ENCODE measurements at regions of chr6 and their contacts with region 1.

Region 1: GRCh38 chr6:117906853-117907599 is at the start of gene SLC35F1:
- DNase-seq: peak; percentile 5
- ATAC-seq: peak; percentile 88
- H3K4me3 ChIP-seq: peak within 1 kb of the TSS; percentile 59 to 78 (median 68)
- H3K27ac ChIP-seq: no peak within 1 kb of the TSS
- H3K4me1 ChIP-seq: peaks cover 6% of the 10 kb centered on the region
- H3K27me3 ChIP-seq: peaks cover 6 to 35% of the 10 kb centered on the region in 2 experiments; a peak in 4 of 5 replicates
- CTCF ChIP-seq: peak; percentile 76
- EP300 ChIP-seq: no peak
- POLR2A ChIP-seq: no peak
- RAD21 ChIP-seq: peak; percentile 27; the same call in 1 of the 2 replicates
- total RNA-seq, gene SLC35F1: not detected in 2 replicates

Region 2: GRCh38 chr6:117847912-117848311 is 59.1 kb before region 1 on chr6:
- CTCF ChIA-PET with region 1: no interaction called
- POLR2A ChIA-PET with region 1: no interaction called
- in situ Hi-C with region 1: no loop called
- intact Hi-C with region 1: no loop called
- DNase-seq: no peak
- ATAC-seq: no peak
- H3K4me3 ChIP-seq: no peak overlapping the region
- H3K27ac ChIP-seq: no peak overlapping the region
- H3K4me1 ChIP-seq: no peaks in the 10 kb centered on the region
- H3K27me3 ChIP-seq: no peaks in the 10 kb centered on the region
- CTCF ChIP-seq: no peak
- EP300 ChIP-seq: no peak
- POLR2A ChIP-seq: no peak
- RAD21 ChIP-seq: no peak

Region 3: GRCh38 chr6:117861545-117861944 is 45.5 kb before region 1 on chr6:
- CTCF ChIA-PET with region 1: no interaction called
- POLR2A ChIA-PET with region 1: no interaction called
- in situ Hi-C with region 1: no loop called
- intact Hi-C with region 1: loop called (anchors 1 kb)
- DNase-seq: no peak
- ATAC-seq: no peak
- H3K4me3 ChIP-seq: no peak overlapping the region
- H3K27ac ChIP-seq: no peak overlapping the region
- H3K4me1 ChIP-seq: no peaks in the 10 kb centered on the region
- H3K27me3 ChIP-seq: no peaks in the 10 kb centered on the region
- CTCF ChIP-seq: no peak
- EP300 ChIP-seq: no peak
- POLR2A ChIP-seq: no peak
- RAD21 ChIP-seq: no peak

Region 4: GRCh38 chr6:118044275-118044674 is 137.2 kb after region 1 on chr6:
- CTCF ChIA-PET with region 1: no interaction called
- POLR2A ChIA-PET with region 1: no interaction called
- in situ Hi-C with region 1: no loop called
- intact Hi-C with region 1: no loop called
- DNase-seq: no peak
- ATAC-seq: no peak
- H3K4me3 ChIP-seq: no peak overlapping the region
- H3K27ac ChIP-seq: no peak overlapping the region
- H3K4me1 ChIP-seq: no peaks in the 10 kb centered on the region
- H3K27me3 ChIP-seq: no peaks in the 10 kb centered on the region
- CTCF ChIP-seq: no peak
- EP300 ChIP-seq: no peak
- POLR2A ChIP-seq: no peak
- RAD21 ChIP-seq: no peak